Adrenal gland (tissue), 19 donors: ENCODE measurements at regions of chr20 and their contacts with region 1.

Region 1: DNA sequence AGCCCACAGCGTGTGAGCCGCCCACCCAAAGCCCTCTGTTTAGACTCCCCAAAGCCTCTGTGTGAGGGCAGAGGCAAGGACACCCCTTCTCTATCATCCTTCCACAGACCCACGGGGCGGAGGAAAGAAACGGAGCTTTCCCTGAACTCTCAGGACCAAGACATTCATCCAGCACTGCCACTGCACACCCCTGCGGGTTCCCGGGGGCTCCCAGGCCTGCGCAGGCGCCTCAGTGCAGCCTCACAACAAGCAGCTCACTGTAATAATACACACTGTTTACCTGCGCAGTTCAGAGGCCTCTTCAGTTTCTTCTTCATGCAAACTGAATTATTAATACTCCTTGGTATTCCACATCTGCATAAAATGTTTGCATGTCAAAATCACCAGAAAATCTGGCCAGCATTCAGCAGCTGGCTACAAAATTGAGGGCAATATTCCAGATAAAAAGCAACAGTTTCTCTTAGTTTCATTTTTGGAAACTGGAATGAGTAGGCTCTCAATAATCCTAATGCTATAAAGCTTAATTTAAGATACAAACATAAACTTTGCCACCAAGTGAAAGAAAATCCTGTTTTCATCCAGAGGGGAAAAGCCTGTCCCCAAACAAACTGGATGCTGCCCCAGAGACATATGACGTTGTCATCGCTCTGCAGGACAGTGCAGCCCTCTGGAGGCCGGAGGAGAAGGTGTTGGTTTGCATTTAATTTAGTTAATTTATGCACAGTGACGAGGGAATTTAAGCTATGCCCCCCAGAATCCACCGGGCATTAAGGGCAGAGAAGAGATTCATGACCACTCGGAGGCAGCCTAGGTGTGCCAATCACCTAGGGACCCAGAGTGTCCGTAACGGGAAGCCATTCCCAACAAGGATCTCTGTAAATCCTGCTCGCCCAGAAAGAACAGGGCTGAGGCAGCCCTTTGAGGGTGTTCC is 45.3 kb downstream of the NINL start:
- DNase-seq: peak in 6 of 7 donors; percentile 51 to 69 (median 58)
- H3K4me3 ChIP-seq: peak overlapping the region in 1 of 4 donors; percentile 46
- H3K27ac ChIP-seq: peak overlapping the region; percentile 7 to 87 (median 80)
- H3K4me1 ChIP-seq: peaks cover 27 to 49% of the 10 kb centered on the region in 2 donors
- H3K27me3 ChIP-seq: no peaks in the 10 kb centered on the region
- CTCF ChIP-seq: peak; percentile 42 to 57 (median 50)
- POLR2A ChIP-seq: no peak

Region 2: DNA sequence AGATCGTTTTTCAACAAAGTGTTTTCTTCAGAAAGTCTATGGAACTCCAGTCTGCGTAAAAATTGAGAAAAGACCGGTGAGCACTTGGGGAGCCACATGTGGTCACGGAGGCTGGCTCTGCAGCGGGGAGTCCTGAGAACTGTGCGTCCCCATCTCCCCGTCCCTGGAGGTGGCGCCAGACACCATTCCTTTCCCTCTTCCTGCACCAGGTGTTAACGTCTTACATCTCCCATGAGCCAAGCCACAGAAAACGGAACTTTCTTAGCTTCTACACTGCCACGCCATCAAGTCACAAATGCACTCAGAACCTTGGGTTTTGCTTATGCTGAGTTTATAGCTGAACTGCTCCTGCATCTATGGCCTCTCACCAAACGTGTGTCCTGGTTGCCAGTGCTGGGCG is 70.0 kb before region 1 on chr20:
- intact Hi-C with region 1: loop called in 1 of 2 experiments (anchors 10 kb)
- DNase-seq: peak in 1 of 7 donors; percentile 15
- H3K4me3 ChIP-seq: no peak overlapping the region
- H3K27ac ChIP-seq: no peak overlapping the region
- H3K4me1 ChIP-seq: no peaks in the 10 kb centered on the region
- H3K27me3 ChIP-seq: no peaks in the 10 kb centered on the region
- CTCF ChIP-seq: peak in 5 of 6 experiments; percentile 4 to 33 (median 29)
- POLR2A ChIP-seq: no peak

Region 3: DNA sequence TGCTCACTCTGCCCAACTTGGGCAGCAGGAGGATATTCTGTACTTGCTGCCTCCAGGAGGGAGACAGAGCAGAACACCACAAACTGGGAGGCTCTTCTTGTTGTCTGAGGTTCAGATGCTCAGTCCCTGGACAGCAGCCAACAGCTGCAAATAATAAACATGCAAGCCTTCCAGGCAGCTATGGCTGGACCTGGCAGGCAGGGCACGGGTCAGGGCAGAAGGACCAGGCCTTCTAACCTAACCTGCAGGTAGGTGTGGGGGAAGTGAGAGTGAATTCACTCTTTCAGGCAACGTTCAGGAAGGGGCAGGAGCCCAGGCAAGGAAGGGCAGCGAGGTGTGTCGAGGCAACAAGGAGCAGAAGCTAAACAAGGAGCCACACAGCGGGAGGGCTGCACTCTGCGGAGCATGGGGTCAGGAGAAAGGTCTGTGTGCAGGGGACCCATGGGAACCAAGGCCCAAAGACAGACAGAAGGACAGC is 13.9 kb after region 1 on chr20:
- intact Hi-C with region 1: loop called in 1 of 2 experiments (anchors 2 kb)
- DNase-seq: peak in 6 of 7 donors; percentile 39 to 75 (median 55)
- H3K4me3 ChIP-seq: no peak overlapping the region
- H3K27ac ChIP-seq: no peak overlapping the region
- H3K4me1 ChIP-seq: peaks cover 0 to 8% of the 10 kb centered on the region in 2 donors
- H3K27me3 ChIP-seq: no peaks in the 10 kb centered on the region
- CTCF ChIP-seq: no peak
- POLR2A ChIP-seq: no peak

Region 4: DNA sequence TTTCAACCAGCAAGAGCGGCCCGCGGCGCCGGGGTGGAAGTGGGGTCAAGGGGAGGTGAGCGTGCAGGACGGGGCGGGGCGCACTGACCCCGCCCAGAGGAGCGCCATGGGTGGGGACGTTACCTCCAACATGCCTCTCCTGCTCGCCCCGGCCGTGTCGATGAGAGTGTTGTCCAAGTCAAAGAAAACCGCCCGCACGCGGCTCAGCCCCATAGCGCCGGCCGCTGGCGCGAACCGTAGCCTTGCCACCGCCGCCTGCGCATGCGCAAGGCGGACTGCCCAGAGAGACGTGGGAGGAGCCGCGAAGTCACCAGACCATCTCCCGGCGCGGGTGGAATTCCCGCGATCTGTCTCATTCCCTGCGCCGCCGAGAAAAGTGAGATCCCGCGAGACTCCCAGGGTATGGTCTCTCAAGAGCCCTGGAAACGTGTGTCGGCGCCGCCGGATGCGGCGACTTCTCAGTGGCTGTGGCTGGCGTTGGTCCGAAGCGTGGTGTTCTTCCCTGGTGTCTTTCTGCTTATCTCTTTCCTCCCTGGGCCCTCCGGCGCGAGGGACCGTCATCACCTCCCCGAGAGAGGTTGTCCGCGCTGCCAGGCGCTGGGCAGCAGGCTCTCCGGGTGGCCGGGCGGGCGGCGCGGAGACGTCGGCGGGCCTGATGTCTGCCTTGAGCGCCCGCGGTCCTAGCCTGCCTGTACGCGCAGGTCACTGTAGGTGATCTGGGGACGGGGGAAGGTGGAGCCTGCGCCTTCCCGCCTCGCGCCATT is 83.9 kb after region 1 on chr20 and contains the start of gene NANP:
- intact Hi-C with region 1: loop called in 1 of 2 experiments (anchors 10 kb)
- DNase-seq: peak; percentile 97 to 99 (median 98)
- H3K4me3 ChIP-seq: peak within 1 kb of the TSS; percentile 48 to 100 (median 87)
- H3K27ac ChIP-seq: peak within 1 kb of the TSS; percentile 84 to 96 (median 94)
- H3K4me1 ChIP-seq: peaks cover 17 to 18% of the 10 kb centered on the region in 2 donors
- H3K27me3 ChIP-seq: no peaks in the 10 kb centered on the region
- CTCF ChIP-seq: peak in 2 of 6 experiments; percentile 2 to 5
- POLR2A ChIP-seq: peak; percentile 73 to 87
- total RNA-seq, gene NANP: 5.5 to 13.6 (median 7.8) TPM